K562 (cell line): ENCODE measurements at regions of chr7 and their contacts with region 1.

Region 1: GRCh38 chr7:5139998-5140397 is 50.0 kb upstream of the WIPI2 start:
- DNase-seq: peak in 2 of 4 experiments; percentile 10 to 56
- ATAC-seq: peak; percentile 80
- H3K4me3 ChIP-seq: no peak overlapping the region
- H3K27ac ChIP-seq: no peak overlapping the region
- H3K4me1 ChIP-seq: peaks cover 0 to 9% of the 10 kb centered on the region in 2 experiments; a peak in 2 of 5 replicates
- H3K27me3 ChIP-seq: peaks cover 10 to 30% of the 10 kb centered on the region in 2 experiments
- CTCF ChIP-seq: peak; percentile 66 to 68 (median 67)
- EP300 ChIP-seq: no peak
- POLR2A ChIP-seq: no peak
- RAD21 ChIP-seq: peak; percentile 32 to 58; a peak in 3 of 4 replicates

Region 2: DNA sequence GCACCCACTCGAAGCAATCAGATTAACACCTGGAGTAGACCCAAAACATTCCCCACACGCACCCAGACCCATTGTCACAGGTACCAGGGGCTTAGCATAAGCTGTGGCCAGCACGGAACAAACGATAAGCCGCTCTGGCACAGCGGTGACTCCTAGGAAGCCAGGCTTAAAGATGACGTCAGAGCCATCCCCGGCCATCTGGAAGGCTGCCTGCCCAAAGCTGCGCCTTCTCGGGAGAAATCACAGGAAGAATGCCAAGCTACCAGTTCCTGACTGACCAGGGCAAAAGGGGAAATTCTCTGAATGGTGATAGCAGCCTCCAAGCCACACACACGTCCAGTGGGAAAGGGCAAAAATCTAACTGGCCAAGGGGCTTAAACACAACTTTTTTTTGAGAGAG is 37.1 kb after region 1 on chr7:
- CTCF ChIA-PET with region 1: interaction called, 4 read pairs
- POLR2A ChIA-PET with region 1: no interaction called
- in situ Hi-C with region 1: no loop called
- intact Hi-C with region 1: loop called (anchors 5 kb)
- DNase-seq: no peak
- ATAC-seq: peak; percentile 60; the same call in 1 of the 3 replicates
- H3K4me3 ChIP-seq: no peak overlapping the region
- H3K27ac ChIP-seq: no peak overlapping the region
- H3K4me1 ChIP-seq: no peaks in the 10 kb centered on the region; a peak in 1 of 5 replicates
- H3K27me3 ChIP-seq: peaks cover 4 to 23% of the 10 kb centered on the region in 2 experiments; a peak in 4 of 5 replicates
- CTCF ChIP-seq: no peak
- EP300 ChIP-seq: no peak
- POLR2A ChIP-seq: no peak
- RAD21 ChIP-seq: no peak

Region 3: DNA sequence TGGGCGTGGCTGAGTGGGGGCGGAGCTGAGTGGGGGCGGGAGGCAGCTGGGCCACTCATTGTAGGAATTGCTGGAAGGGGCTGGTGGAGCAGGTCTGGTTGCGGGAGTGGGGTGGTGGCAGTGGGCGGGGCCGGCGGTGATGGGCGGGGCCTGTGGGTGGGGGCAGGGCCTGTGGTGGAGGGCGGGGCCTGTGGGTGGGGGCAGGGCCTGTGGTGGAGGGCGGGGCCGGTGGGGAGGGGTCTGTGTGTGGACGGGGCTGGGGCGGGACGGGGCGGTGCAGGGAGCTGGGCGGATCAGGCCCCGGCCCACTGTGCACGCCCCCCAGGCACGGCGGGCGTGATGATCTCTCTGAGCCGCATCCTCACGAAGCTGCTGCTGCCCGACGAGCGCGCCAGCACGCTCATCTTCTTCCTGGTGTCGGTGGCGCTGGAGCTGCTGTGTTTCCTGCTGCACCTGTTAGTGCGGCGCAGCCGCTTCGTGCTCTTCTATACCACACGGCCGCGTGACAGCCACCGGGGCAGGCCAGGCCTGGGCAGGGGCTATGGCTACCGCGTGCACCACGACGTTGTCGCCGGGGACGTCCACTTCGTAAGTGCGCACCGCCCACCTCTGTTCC is 156.7 kb after region 1 on chr7:
- CTCF ChIA-PET with region 1: no interaction called
- POLR2A ChIA-PET with region 1: no interaction called
- in situ Hi-C with region 1: no loop called
- intact Hi-C with region 1: no loop called
- DNase-seq: peak; percentile 82 to 96 (median 94)
- ATAC-seq: peak; percentile 90
- H3K4me3 ChIP-seq: peak overlapping the region; percentile 23; the same call in 1 of the 2 replicates
- H3K27ac ChIP-seq: no peak overlapping the region
- H3K4me1 ChIP-seq: peaks cover 4 to 41% of the 10 kb centered on the region in 2 experiments; a peak in 3 of 5 replicates
- H3K27me3 ChIP-seq: peaks cover 0 to 35% of the 10 kb centered on the region in 2 experiments; a peak in 3 of 5 replicates
- CTCF ChIP-seq: no peak
- EP300 ChIP-seq: no peak
- POLR2A ChIP-seq: no peak
- RAD21 ChIP-seq: no peak

Region 4: GRCh38 chr7:5822742-5823503 is 682.9 kb after region 1 on chr7:
- CTCF ChIA-PET with region 1: no interaction called
- POLR2A ChIA-PET with region 1: no interaction called
- in situ Hi-C with region 1: loop called (anchors 10 kb)
- intact Hi-C with region 1: no loop called
- DNase-seq: peak; percentile 92 to 97 (median 92)
- ATAC-seq: peak; percentile 100
- H3K4me3 ChIP-seq: peak overlapping the region; percentile 53
- H3K27ac ChIP-seq: peak overlapping the region; percentile 83
- H3K4me1 ChIP-seq: peaks cover 4 to 19% of the 10 kb centered on the region in 2 experiments; a peak in 4 of 5 replicates
- H3K27me3 ChIP-seq: no peaks in the 10 kb centered on the region
- CTCF ChIP-seq: 0 out of 6 replicates have a peak, but pooled peaks of 1 of the 3 experiments have one; percentile 6
- EP300 ChIP-seq: no peak
- POLR2A ChIP-seq: peak; percentile 80
- RAD21 ChIP-seq: no peak